HCT116 (cell line): ENCODE measurements at regions of chr7 and their contacts with region 1.

Region 1: DNA sequence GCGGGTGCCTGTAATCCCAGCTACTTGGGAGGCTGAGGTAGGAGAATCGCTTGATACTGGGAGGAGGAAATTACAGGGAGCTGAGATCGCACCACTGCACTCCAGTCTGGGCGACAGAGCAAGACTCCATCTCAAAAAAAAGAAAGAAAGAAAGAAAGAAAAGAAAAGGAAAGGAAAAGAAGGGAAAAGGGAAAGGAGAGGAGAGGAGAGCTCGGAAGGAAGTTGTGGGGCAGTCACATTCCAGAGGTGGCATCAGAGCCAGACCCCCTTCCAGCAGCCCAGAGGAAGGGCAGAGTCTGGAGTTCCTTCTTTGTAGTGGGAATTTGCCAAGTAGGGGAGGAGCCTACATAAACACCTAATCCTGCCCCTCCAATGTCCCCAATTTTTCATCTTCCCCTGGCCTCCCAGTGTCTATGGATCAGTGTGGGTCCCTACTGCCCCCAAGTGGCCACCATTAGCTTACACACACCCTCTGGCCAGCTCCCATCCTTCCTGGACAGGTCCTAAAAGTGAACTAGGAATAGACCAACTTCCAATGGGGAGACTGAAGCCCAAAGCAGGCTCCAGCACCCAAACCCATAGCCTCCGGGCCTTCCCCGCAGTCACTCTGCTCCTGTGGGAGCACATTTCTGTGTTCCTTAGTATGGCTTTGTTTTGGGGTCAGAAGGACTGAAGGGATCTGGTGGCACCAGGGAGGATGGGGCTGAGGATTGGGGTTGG is 39.6 kb upstream of the HSPB1 start:
- DNase-seq: peak; percentile 69
- ATAC-seq: peak; percentile 91
- H3K4me3 ChIP-seq: no peak overlapping the region
- H3K27ac ChIP-seq: no peak overlapping the region
- H3K4me1 ChIP-seq: peaks cover 4 to 19% of the 10 kb centered on the region in 2 experiments; a peak in 3 of 4 replicates
- H3K27me3 ChIP-seq: no peaks in the 10 kb centered on the region
- CTCF ChIP-seq: peak; percentile 86 to 92 (median 91)
- POLR2A ChIP-seq: no peak
- RAD21 ChIP-seq: peak; percentile 89

Region 2: GRCh38 chr7:76031964-76032363 is 230.9 kb before region 1 on chr7:
- CTCF ChIA-PET with region 1: interaction called, 3 read pairs
- POLR2A ChIA-PET with region 1: no interaction called
- RAD21 ChIA-PET with region 1: no interaction called
- intact Hi-C with region 1: loop called (anchors 1 kb)
- DNase-seq: no peak
- ATAC-seq: no peak
- H3K4me3 ChIP-seq: no peak overlapping the region
- H3K27ac ChIP-seq: no peak overlapping the region
- H3K4me1 ChIP-seq: no peaks in the 10 kb centered on the region
- H3K27me3 ChIP-seq: no peaks in the 10 kb centered on the region
- CTCF ChIP-seq: no peak
- POLR2A ChIP-seq: no peak
- RAD21 ChIP-seq: no peak

Region 3: GRCh38 chr7:76069238-76069638 is 193.6 kb before region 1 on chr7:
- CTCF ChIA-PET with region 1: interaction called, 12 read pairs
- POLR2A ChIA-PET with region 1: no interaction called
- RAD21 ChIA-PET with region 1: no interaction called
- intact Hi-C with region 1: no loop called
- DNase-seq: peak; percentile 65
- ATAC-seq: peak; percentile 80
- H3K4me3 ChIP-seq: no peak overlapping the region
- H3K27ac ChIP-seq: no peak overlapping the region
- H3K4me1 ChIP-seq: peaks cover 10% of the 10 kb centered on the region in 2 experiments
- H3K27me3 ChIP-seq: no peaks in the 10 kb centered on the region
- CTCF ChIP-seq: peak; percentile 33 to 43 (median 35); a peak in 4 of 6 replicates
- POLR2A ChIP-seq: no peak
- RAD21 ChIP-seq: peak; percentile 72

Region 4: DNA sequence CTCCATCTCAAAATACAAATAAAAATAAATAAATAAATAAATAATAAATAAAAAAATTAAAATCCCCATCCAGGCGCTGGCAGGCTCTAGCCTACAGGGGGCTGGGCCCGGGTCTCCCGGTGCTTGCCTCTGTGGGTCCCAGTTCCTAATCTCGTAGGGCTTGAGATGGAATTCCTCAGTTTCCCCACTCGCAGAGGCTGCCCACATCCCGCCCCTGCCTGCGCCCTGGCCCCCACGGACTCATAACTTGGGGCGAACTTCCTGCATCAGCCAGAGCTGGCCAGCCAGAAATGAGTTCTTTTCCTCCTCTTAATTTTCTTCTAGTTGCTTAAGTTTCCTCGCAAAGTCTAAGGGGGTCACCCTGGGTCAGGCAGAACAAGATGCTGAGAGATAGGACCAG is 83.2 kb before region 1 on chr7:
- CTCF ChIA-PET with region 1: interaction called, 24 read pairs
- POLR2A ChIA-PET with region 1: no interaction called
- RAD21 ChIA-PET with region 1: interaction called, 6 to 8 read pairs
- intact Hi-C with region 1: loop called (anchors 1 kb)
- DNase-seq: no peak
- ATAC-seq: no peak
- H3K4me3 ChIP-seq: no peak overlapping the region
- H3K27ac ChIP-seq: no peak overlapping the region
- H3K4me1 ChIP-seq: peaks cover 3 to 13% of the 10 kb centered on the region in 2 experiments; a peak in 2 of 4 replicates
- H3K27me3 ChIP-seq: no peaks in the 10 kb centered on the region
- CTCF ChIP-seq: no peak
- POLR2A ChIP-seq: no peak
- RAD21 ChIP-seq: no peak

Region 5: GRCh38 chr7:76244781-76245391 is 18.0 kb before region 1 on chr7:
- CTCF ChIA-PET with region 1: no interaction called
- POLR2A ChIA-PET with region 1: no interaction called
- RAD21 ChIA-PET with region 1: no interaction called
- intact Hi-C with region 1: no loop called
- DNase-seq: no peak
- ATAC-seq: no peak
- H3K4me3 ChIP-seq: no peak overlapping the region
- H3K27ac ChIP-seq: no peak overlapping the region
- H3K4me1 ChIP-seq: no peaks in the 10 kb centered on the region
- H3K27me3 ChIP-seq: no peaks in the 10 kb centered on the region
- CTCF ChIP-seq: no peak
- POLR2A ChIP-seq: no peak
- RAD21 ChIP-seq: no peak